Activated CD8-positive, alpha-beta T cell treated with anti-CD3 and anti-CD28 coated beads for 36 hours (primary cell): ENCODE measurements at regions of chr2 and their contacts with region 1.

Region 1: DNA sequence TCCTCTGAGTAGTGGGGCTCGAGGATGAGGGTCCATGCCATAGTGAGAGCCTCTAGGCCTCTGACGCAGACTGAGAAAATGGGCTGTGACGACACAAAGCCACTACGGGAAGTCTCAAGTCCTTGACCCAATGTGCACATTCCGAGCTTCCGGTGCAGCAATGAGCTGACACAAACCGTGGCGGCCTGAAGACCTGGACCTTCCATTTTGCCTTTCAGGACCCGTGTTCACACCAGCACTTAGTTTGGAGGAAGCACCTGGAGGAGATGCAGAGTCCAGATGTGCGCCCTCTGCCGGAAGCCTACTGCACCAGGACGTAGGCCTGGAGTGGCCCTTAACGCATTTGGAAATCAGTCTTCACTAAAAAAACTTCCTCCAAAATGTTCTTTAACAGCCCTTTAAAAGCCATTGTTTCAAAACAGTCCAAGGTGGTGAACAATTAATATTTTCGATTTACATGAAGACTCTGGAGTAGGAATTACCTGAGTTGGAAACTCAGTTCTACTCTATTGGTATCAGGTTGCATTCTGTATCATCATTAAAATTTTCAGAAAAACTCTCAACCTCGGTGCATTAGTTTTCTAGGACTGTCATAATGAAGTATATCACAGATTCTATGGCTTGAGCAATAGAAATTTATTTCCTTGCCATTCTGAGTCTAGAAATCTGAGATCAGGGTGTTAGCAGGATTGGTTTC is 33.9 kb downstream of the BMP10 start:
- DNase-seq: peak; percentile 85
- ATAC-seq: peak; percentile 55
- H3K4me3 Mint-ChIP-seq: no peak overlapping the region
- H3K27ac Mint-ChIP-seq: peak overlapping the region; percentile 43
- H3K4me1 Mint-ChIP-seq: peaks cover 37% of the 10 kb centered on the region
- H3K27me3 Mint-ChIP-seq: no peaks in the 10 kb centered on the region
- CTCF ChIP-seq: peak; percentile 84

Region 2: GRCh38 chr2:68662466-68662865 is 174.8 kb before region 1 on chr2:
- CTCF ChIA-PET with region 1: no interaction called
- POLR2A ChIA-PET with region 1: no interaction called
- intact Hi-C with region 1: no loop called
- DNase-seq: no peak
- ATAC-seq: no peak
- H3K4me3 Mint-ChIP-seq: no peak overlapping the region
- H3K27ac Mint-ChIP-seq: no peak overlapping the region
- H3K4me1 Mint-ChIP-seq: peaks cover 24% of the 10 kb centered on the region
- H3K27me3 Mint-ChIP-seq: peaks cover 21% of the 10 kb centered on the region
- CTCF ChIP-seq: no peak

Region 3: GRCh38 chr2:68715353-68716041 is 121.8 kb before region 1 on chr2:
- CTCF ChIA-PET with region 1: interaction called, 3 read pairs
- POLR2A ChIA-PET with region 1: interaction called, 3 read pairs
- intact Hi-C with region 1: loop called (anchors 5 kb)
- DNase-seq: peak; percentile 66
- ATAC-seq: no peak
- H3K4me3 Mint-ChIP-seq: no peak overlapping the region
- H3K27ac Mint-ChIP-seq: peak overlapping the region; percentile 76
- H3K4me1 Mint-ChIP-seq: peaks cover 69% of the 10 kb centered on the region
- H3K27me3 Mint-ChIP-seq: peaks cover 2% of the 10 kb centered on the region
- CTCF ChIP-seq: peak; percentile 71

Region 4: GRCh38 chr2:68766376-68766845 is 70.9 kb before region 1 on chr2:
- CTCF ChIA-PET with region 1: interaction called, 16 read pairs
- POLR2A ChIA-PET with region 1: interaction called, 3 read pairs
- intact Hi-C with region 1: no loop called
- DNase-seq: peak; percentile 80
- ATAC-seq: peak; percentile 51
- H3K4me3 Mint-ChIP-seq: peak overlapping the region; percentile 68
- H3K27ac Mint-ChIP-seq: peak overlapping the region; percentile 99
- H3K4me1 Mint-ChIP-seq: peaks cover 94% of the 10 kb centered on the region
- H3K27me3 Mint-ChIP-seq: no peaks in the 10 kb centered on the region
- CTCF ChIP-seq: no peak

Region 5: DNA sequence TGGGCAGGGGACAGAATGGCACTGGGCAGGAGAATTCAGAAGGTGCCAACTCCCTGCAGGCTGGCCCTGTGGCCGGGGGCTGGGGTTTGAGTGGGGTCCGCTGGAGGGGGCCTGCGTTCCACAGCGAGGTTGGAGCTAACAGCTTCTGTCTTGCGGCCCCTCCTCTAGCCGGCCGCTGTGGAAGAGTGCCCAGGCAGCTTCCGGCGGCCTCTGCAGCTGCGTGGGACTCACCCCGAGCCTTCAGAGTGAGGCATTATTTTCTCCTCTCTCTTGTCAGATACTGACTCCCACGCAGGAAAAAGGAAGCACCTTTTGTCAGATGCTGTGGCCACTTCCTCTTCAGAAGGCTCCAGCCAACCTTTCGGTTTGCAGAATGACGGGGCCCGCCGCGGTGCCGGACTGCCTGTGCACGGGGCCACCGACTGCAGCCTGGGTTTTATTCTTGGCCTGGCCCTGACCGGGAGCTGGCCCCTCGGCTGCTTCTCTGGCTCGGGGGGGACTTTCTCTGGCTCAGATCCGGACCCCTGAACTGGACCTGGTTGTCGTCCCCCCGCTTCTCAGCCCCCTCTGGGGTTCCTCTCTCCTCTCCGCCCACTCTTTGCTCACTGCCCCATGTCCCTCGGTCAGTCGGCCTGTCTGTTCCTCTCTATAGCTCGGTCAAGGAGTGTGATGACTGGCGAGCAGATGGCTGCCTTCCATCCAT is 62.6 kb before region 1 on chr2:
- CTCF ChIA-PET with region 1: interaction called, 6 read pairs
- POLR2A ChIA-PET with region 1: interaction called, 3 read pairs
- intact Hi-C with region 1: loop called (anchors 1 kb)
- DNase-seq: peak; percentile 89
- ATAC-seq: peak; percentile 73
- H3K4me3 Mint-ChIP-seq: peak overlapping the region; percentile 75
- H3K27ac Mint-ChIP-seq: peak overlapping the region; percentile 99
- H3K4me1 Mint-ChIP-seq: peaks cover 87% of the 10 kb centered on the region
- H3K27me3 Mint-ChIP-seq: no peaks in the 10 kb centered on the region
- CTCF ChIP-seq: no peak

Region 6: GRCh38 chr2:68849579-68850030 is 12.3 kb after region 1 on chr2:
- CTCF ChIA-PET with region 1: interaction called, 27 read pairs
- POLR2A ChIA-PET with region 1: interaction called, 3 read pairs
- intact Hi-C with region 1: no loop called
- DNase-seq: no peak
- ATAC-seq: no peak
- H3K4me3 Mint-ChIP-seq: no peak overlapping the region
- H3K27ac Mint-ChIP-seq: no peak overlapping the region
- H3K4me1 Mint-ChIP-seq: no peaks in the 10 kb centered on the region
- H3K27me3 Mint-ChIP-seq: peaks cover 11% of the 10 kb centered on the region
- CTCF ChIP-seq: no peak

Region 7: DNA sequence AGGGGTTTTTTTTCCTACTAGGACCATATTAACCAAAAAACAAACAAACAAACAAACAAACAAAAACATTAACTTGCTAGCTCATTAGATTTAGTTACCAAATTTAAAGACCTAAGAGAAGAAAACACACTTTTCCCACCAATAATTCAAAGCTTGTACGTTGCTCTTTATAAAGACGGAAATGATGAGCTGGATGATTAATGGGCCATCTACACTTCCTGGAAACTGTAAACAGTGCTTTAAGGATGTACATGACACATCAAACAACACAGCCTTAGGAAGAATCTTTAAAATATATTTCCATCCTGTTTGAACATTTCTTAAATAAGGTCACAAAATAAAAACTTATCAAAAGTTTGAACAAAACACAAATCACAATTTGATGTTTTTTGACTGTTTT is 32.9 kb after region 1 on chr2:
- CTCF ChIA-PET with region 1: no interaction called
- POLR2A ChIA-PET with region 1: no interaction called
- intact Hi-C with region 1: no loop called
- DNase-seq: no peak
- ATAC-seq: no peak
- H3K4me3 Mint-ChIP-seq: no peak overlapping the region
- H3K27ac Mint-ChIP-seq: no peak overlapping the region
- H3K4me1 Mint-ChIP-seq: peaks cover 2% of the 10 kb centered on the region
- H3K27me3 Mint-ChIP-seq: no peaks in the 10 kb centered on the region
- CTCF ChIP-seq: no peak